B cell (primary cell): ENCODE measurements at regions of chr17 and their contacts with region 1.

Region 1: DNA sequence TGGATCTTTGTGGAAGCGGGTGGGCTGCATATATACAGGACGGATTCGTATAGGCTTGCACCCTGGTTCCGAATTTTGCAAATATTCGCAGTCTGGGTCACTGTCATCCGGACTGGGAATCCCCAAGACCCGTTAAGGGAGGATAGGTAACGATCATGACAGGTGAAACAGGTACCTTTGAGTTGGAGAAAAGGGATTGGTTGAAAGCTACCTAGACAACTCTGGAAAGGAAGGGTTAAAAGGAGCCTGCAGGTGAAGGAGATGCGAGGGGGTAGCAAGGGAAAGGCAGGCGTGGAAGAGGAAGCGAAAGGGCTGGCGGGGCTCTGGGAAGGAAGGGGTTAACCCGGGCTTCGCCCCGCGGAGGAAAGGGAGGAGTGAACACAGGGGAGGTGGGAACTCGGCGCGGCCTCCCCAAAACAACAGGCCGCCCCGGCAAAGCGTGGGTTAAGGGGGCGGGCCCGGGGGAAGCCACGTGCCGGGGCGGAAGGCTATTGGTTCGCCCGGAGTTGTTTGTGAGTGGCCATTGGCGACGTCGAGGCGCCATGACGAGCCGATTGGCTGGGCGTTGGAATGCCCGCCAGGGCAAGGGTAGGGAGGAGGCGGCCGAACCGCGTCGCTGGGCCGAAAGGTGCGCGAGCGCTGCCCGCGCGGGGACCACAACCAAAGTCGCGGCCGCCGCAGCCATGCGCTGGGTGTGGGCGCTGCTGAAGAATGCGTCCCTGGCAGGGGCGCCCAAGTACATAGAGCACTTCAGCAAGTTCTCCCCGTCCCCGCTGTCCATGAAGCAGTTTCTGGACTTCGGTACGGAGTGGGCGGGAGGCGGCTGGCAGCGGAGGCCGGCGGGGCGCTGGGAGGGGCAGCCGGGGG is at the start of gene PDK2:
- DNase-seq: peak; percentile 98
- ATAC-seq: peak; percentile 93
- H3K4me3 ChIP-seq: peak within 1 kb of the TSS; percentile 61 to 95 (median 89)
- H3K4me3 Mint-ChIP-seq: peak within 1 kb of the TSS; percentile 99
- H3K27ac ChIP-seq: peak within 1 kb of the TSS; percentile 3 to 77
- H3K27ac Mint-ChIP-seq: peak within 1 kb of the TSS; percentile 94
- H3K4me1 ChIP-seq: peaks cover 8 to 20% of the 10 kb centered on the region in 2 donors
- H3K4me1 Mint-ChIP-seq: peaks cover 27% of the 10 kb centered on the region
- H3K27me3 ChIP-seq: peaks cover 0 to 3% (median 0%) of the 10 kb centered on the region in 4 experiments
- H3K27me3 Mint-ChIP-seq: no peaks in the 10 kb centered on the region
- CTCF ChIP-seq: no peak
- total RNA-seq, gene PDK2: 35.2 and 36.7 TPM in 2 replicates

Region 2: DNA sequence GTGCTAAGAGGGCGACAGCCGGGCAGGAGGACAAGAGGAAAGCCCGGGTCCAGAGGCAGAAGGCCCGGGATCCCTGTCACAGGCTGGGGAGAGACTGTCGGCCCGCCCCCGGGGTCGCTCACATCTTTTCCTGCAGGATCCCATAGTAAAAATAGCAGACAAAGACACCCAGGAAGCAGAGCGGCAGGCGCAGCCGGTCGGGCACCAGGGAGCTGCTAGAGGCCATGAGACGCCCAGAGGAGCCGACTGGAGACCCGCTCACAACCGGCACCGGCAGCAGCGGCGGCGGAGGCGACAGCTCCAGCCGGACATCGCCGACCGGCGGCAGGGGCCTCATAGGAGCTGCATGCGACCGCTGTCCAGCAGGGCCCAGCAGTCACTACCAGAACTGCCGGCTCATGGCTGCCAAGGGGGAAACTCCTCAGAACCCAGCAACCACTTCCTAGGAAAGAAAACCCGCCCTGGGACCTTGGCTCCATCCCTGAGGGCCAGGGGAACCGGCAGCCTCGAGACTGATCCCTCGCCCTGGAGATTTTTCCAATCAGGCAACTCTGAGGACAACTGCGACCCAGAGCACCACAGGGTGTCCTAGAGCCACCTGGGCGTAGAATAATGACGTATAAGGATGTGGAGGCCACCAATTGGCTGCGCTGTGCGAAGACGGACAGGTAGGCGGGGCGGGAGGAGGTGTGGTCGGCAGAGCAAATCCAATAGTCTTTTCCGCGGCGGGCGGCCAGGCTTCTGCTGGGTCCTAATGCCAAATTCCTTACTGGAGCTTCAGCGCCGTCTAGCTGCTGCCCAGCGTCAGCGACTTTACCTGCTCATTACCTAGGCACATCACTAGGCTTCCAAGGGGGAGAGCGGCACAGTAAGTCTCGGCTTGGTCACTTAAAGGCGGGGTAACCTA is 387.1 kb before region 1 on chr17 and contains the start of gene SLC35B1:
- CTCF ChIA-PET with region 1: no interaction called
- POLR2A ChIA-PET with region 1: no interaction called
- intact Hi-C with region 1: loop called (anchors 1 kb)
- DNase-seq: peak; percentile 99
- ATAC-seq: peak; percentile 98
- H3K4me3 ChIP-seq: peak within 1 kb of the TSS; percentile 61 to 94 (median 84)
- H3K4me3 Mint-ChIP-seq: peak within 1 kb of the TSS; percentile 88
- H3K27ac ChIP-seq: peak within 1 kb of the TSS; percentile 68 to 93
- H3K27ac Mint-ChIP-seq: peak within 1 kb of the TSS; percentile 93
- H3K4me1 ChIP-seq: peaks cover 19 to 25% of the 10 kb centered on the region in 2 donors
- H3K4me1 Mint-ChIP-seq: peaks cover 31% of the 10 kb centered on the region
- H3K27me3 ChIP-seq: no peaks in the 10 kb centered on the region
- H3K27me3 Mint-ChIP-seq: no peaks in the 10 kb centered on the region
- CTCF ChIP-seq: peak; percentile 81
- total RNA-seq, gene SLC35B1: 40.5 and 47.2 TPM in 2 replicates

Region 3: DNA sequence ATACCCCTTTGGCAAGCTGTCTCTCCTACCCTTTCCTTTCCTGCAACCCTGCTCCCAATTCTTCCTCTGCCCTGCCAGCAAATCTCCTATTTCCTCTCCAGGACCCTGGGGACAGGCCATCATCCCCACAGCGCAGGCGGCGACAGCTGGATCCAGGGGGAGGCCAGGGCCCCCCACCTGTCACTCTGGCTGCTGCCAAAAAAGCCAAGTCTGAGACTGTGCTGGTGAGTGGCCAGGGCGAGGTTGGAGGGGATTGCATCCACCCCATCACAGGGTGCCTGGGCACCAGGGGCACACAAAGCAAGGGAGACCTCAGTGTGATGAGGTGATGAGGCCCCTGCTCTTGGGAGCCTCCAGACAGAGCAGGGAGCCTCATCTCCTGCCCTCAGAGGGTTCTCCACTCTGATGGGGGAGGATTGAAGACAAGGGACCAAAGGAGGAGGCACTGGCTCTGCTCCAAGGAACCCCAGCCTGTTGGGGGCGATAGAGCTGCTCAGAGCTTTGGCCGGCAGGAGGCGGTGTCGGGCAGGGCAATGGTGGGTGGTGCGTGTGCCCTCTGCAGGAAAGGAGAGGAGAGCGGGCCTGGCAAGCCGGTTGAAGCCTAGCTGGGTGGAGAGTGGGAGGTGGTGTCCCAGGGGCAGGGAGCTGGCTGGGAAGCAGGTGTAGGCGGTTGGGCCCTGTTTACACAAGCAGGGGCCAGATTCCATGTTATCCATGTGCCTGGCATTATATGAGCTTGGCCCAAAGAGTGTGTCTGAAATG is 15.5 kb before region 1 on chr17:
- CTCF ChIA-PET with region 1: interaction called, 13 read pairs
- POLR2A ChIA-PET with region 1: interaction called, 4 read pairs
- intact Hi-C with region 1: no loop called
- DNase-seq: peak; percentile 38
- ATAC-seq: peak; percentile 43
- H3K4me3 ChIP-seq: no peak overlapping the region
- H3K4me3 Mint-ChIP-seq: no peak overlapping the region
- H3K27ac ChIP-seq: no peak overlapping the region
- H3K27ac Mint-ChIP-seq: no peak overlapping the region
- H3K4me1 ChIP-seq: peaks cover 7 to 22% of the 10 kb centered on the region in 2 donors
- H3K4me1 Mint-ChIP-seq: peaks cover 21% of the 10 kb centered on the region
- H3K27me3 ChIP-seq: no peaks in the 10 kb centered on the region
- H3K27me3 Mint-ChIP-seq: no peaks in the 10 kb centered on the region
- CTCF ChIP-seq: peak; percentile 21

Region 4: DNA sequence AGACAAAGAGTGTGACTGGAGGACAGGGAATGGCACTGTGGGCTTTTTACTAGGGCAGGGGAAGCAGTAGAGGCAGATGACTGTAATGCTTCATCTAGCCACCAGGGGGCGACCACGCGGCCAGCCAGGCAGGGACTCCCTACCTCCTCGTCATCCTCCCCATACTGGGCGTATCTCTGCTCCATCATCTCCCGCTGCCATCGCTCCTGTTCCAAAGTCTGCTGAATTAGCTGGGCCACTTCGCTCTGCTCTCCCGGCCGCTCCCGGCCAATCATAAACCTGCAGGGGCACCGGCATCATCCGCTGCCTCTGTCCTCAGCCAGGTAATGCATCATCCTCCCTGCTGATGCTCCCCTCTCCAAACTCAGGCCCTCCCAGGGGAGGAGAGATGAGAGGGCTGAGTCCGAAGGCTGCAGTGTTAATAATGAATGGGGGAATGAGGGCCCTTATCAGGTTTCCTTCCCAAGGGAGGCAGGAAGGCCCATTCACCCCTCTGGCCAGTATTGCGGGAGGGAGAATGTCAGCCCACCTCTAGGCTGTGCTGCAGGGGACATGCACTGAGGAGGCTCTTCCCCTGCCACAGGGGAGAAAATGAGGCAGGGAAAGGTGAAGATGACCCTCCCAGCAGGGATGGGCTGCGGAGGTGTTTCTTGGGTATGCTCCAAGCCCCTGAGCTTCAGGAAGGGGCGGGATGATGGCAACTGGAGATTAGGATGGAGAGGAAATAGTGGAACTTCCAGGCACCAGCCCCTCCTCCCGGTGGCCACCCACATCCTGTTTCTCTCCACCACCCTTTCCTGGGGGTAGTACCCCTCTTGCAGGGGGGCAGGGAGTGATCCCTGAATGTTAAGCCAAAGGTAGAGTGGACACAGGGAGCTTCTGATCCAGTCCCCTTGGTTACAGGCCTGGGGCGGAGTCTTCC is 45.2 kb after region 1 on chr17:
- CTCF ChIA-PET with region 1: interaction called, 10 read pairs
- POLR2A ChIA-PET with region 1: interaction called, 3 read pairs
- intact Hi-C with region 1: no loop called
- DNase-seq: peak; percentile 85
- ATAC-seq: peak; percentile 83
- H3K4me3 ChIP-seq: no peak overlapping the region
- H3K4me3 Mint-ChIP-seq: peak overlapping the region; percentile 64
- H3K27ac ChIP-seq: peak overlapping the region in 1 of 2 donors; percentile 48
- H3K27ac Mint-ChIP-seq: peak overlapping the region; percentile 81
- H3K4me1 ChIP-seq: peaks cover 51 to 60% of the 10 kb centered on the region in 2 donors
- H3K4me1 Mint-ChIP-seq: peaks cover 61% of the 10 kb centered on the region
- H3K27me3 ChIP-seq: no peaks in the 10 kb centered on the region
- H3K27me3 Mint-ChIP-seq: no peaks in the 10 kb centered on the region
- CTCF ChIP-seq: peak; percentile 92

Region 5: GRCh38 chr17:50161023-50161910 is 66.3 kb after region 1 on chr17:
- CTCF ChIA-PET with region 1: interaction called, 20 read pairs
- POLR2A ChIA-PET with region 1: no interaction called
- intact Hi-C with region 1: loop called (anchors 1 kb)
- DNase-seq: peak; percentile 93
- ATAC-seq: peak; percentile 92
- H3K4me3 ChIP-seq: peak overlapping the region; percentile 52 to 68 (median 66)
- H3K4me3 Mint-ChIP-seq: peak overlapping the region; percentile 80
- H3K27ac ChIP-seq: no peak overlapping the region
- H3K27ac Mint-ChIP-seq: peak overlapping the region; percentile 72
- H3K4me1 ChIP-seq: peaks cover 36 to 41% of the 10 kb centered on the region in 2 donors
- H3K4me1 Mint-ChIP-seq: peaks cover 38% of the 10 kb centered on the region
- H3K27me3 ChIP-seq: no peaks in the 10 kb centered on the region
- H3K27me3 Mint-ChIP-seq: no peaks in the 10 kb centered on the region
- CTCF ChIP-seq: peak; percentile 97

Region 6: GRCh38 chr17:50200457-50201275 is 105.7 kb after region 1 on chr17:
- CTCF ChIA-PET with region 1: interaction called, 13 read pairs
- POLR2A ChIA-PET with region 1: no interaction called
- intact Hi-C with region 1: no loop called
- DNase-seq: peak; percentile 90
- ATAC-seq: peak; percentile 79
- H3K4me3 ChIP-seq: peak overlapping the region; percentile 15 to 59 (median 48)
- H3K4me3 Mint-ChIP-seq: peak overlapping the region; percentile 85
- H3K27ac ChIP-seq: no peak overlapping the region
- H3K27ac Mint-ChIP-seq: peak overlapping the region; percentile 21
- H3K4me1 ChIP-seq: peaks cover 18 to 23% of the 10 kb centered on the region in 2 donors
- H3K4me1 Mint-ChIP-seq: peaks cover 27% of the 10 kb centered on the region
- H3K27me3 ChIP-seq: peaks cover 0 to 49% (median 11%) of the 10 kb centered on the region in 4 experiments
- H3K27me3 Mint-ChIP-seq: peaks cover 50% of the 10 kb centered on the region
- CTCF ChIP-seq: peak; percentile 100

Region 7: GRCh38 chr17:50238601-50239280 is 143.8 kb after region 1 on chr17:
- CTCF ChIA-PET with region 1: no interaction called
- POLR2A ChIA-PET with region 1: no interaction called
- intact Hi-C with region 1: no loop called
- DNase-seq: no peak
- ATAC-seq: no peak
- H3K4me3 ChIP-seq: no peak overlapping the region
- H3K4me3 Mint-ChIP-seq: no peak overlapping the region
- H3K27ac ChIP-seq: no peak overlapping the region
- H3K27ac Mint-ChIP-seq: no peak overlapping the region
- H3K4me1 ChIP-seq: no peaks in the 10 kb centered on the region
- H3K4me1 Mint-ChIP-seq: no peaks in the 10 kb centered on the region
- H3K27me3 ChIP-seq: peaks cover 0 to 13% (median 5%) of the 10 kb centered on the region in 4 experiments
- H3K27me3 Mint-ChIP-seq: peaks cover 39% of the 10 kb centered on the region
- CTCF ChIP-seq: no peak

Region 8: DNA sequence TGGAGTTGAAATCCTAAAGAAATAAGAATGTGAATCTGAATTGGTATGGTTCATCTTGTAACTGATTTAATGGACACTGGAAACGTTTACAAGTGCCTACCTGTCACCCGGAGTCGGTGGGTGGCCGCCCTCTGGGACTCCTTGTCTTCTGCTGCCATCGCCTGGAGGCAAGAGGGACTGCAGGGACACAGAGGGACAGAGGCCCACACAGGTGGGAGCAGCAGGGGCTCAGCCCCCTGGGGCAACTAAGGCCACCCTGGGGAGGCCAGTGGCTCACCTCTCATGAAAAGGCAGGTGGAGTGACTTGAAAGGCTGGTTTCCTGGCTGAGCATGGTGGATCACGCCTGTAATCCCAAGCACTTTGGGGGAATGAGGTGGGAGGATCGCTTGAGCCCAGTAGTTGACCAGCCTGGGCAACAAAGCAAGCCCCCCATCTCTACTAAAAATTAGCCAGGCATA is 202.4 kb after region 1 on chr17:
- CTCF ChIA-PET with region 1: interaction called, 47 read pairs
- POLR2A ChIA-PET with region 1: interaction called, 7 read pairs
- intact Hi-C with region 1: no loop called
- DNase-seq: peak; percentile 81
- ATAC-seq: peak; percentile 99
- H3K4me3 ChIP-seq: no peak overlapping the region
- H3K4me3 Mint-ChIP-seq: no peak overlapping the region
- H3K27ac ChIP-seq: no peak overlapping the region
- H3K27ac Mint-ChIP-seq: peak overlapping the region; percentile 43
- H3K4me1 ChIP-seq: no peaks in the 10 kb centered on the region
- H3K4me1 Mint-ChIP-seq: no peaks in the 10 kb centered on the region
- H3K27me3 ChIP-seq: no peaks in the 10 kb centered on the region
- H3K27me3 Mint-ChIP-seq: peaks cover 20% of the 10 kb centered on the region
- CTCF ChIP-seq: peak; percentile 92